ENCODE measurements at regions of chr2 and their contacts with region 1.

Region 1: DNA sequence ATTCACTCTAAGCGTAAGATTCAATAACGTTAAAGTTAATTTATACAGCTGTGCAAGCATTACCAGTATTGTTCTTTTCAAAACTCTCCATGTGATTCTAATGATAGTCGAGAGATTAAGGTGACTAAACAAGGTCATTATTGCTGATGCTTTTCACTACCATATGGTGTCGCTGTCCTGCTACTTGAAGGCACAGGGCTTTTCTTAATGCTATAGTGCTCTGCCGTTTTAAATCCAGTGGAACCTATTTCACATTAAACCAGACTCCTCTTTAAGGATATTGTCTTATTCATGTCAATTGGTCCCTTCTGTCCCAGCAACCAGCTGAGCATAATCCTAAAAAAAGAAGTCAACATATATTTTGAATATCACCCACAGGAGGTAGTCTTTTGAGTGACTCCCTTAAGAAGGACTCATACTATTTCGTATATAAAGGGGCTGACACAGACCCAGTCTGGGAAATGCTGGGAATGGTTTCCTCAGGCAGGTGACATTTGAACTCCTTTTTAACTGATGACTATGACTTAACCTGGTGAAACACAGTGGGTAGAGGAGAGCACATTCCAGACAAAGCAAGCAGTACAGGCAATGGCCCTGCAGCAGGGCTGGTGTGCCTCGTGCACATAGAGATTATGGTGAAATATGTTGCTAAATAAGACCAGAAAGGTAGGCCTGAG is 53.9 kb upstream of the CYTIP start:
- DNase-seq: peak; percentile 39 to 54 (median 50)
- ATAC-seq: peak; percentile 97
- H3K4me3 ChIP-seq: no peak overlapping the region
- H3K27ac ChIP-seq: no peak overlapping the region
- H3K4me1 ChIP-seq: no peaks in the 10 kb centered on the region
- H3K27me3 ChIP-seq: no peaks in the 10 kb centered on the region
- CTCF ChIP-seq: peak; percentile 80 to 95 (median 89)
- EP300 ChIP-seq: no peak
- POLR2A ChIP-seq: no peak
- RAD21 ChIP-seq: peak; percentile 91 to 98

Region 2: GRCh38 chr2:157596992-157597681 is 99.4 kb after region 1 on chr2:
- CTCF ChIA-PET with region 1: interaction called, 8 read pairs
- POLR2A ChIA-PET with region 1: no interaction called
- in situ Hi-C with region 1: no loop called
- intact Hi-C with region 1: loop called (anchors 2 kb)
- DNase-seq: peak in 2 of 4 experiments; percentile 34 to 38
- ATAC-seq: peak; percentile 90
- H3K4me3 ChIP-seq: no peak overlapping the region
- H3K27ac ChIP-seq: no peak overlapping the region
- H3K4me1 ChIP-seq: peaks cover 0 to 5% of the 10 kb centered on the region in 2 experiments; a peak in 1 of 5 replicates
- H3K27me3 ChIP-seq: peaks cover 0 to 9% of the 10 kb centered on the region in 2 experiments; a peak in 4 of 5 replicates
- CTCF ChIP-seq: peak; percentile 56 to 63 (median 60)
- EP300 ChIP-seq: no peak
- POLR2A ChIP-seq: no peak
- RAD21 ChIP-seq: peak in 1 of 2 experiments; percentile 60; a peak in 2 of 4 replicates

Region 3: GRCh38 chr2:157777427-157777826 is 279.7 kb after region 1 on chr2:
- CTCF ChIA-PET with region 1: no interaction called
- POLR2A ChIA-PET with region 1: no interaction called
- in situ Hi-C with region 1: no loop called
- intact Hi-C with region 1: loop called (anchors 1 kb)
- DNase-seq: peak; percentile 60 to 70 (median 66)
- ATAC-seq: peak; percentile 67; the same call in 2 of the 3 replicates
- H3K4me3 ChIP-seq: no peak overlapping the region
- H3K27ac ChIP-seq: no peak overlapping the region
- H3K4me1 ChIP-seq: peaks cover 0 to 9% of the 10 kb centered on the region in 2 experiments; a peak in 4 of 5 replicates
- H3K27me3 ChIP-seq: no peaks in the 10 kb centered on the region
- CTCF ChIP-seq: peak; percentile 54 to 86 (median 58); a peak in 4 of 6 replicates
- EP300 ChIP-seq: no peak
- POLR2A ChIP-seq: no peak
- RAD21 ChIP-seq: peak; percentile 93 to 94

Region 4: GRCh38 chr2:158753641-158754611 is 1256.2 kb after region 1 on chr2:
- CTCF ChIA-PET with region 1: no interaction called
- POLR2A ChIA-PET with region 1: no interaction called
- in situ Hi-C with region 1: loop called (anchors 25 kb)
- intact Hi-C with region 1: loop called (anchors 5 kb)
- DNase-seq: peak; percentile 74 to 84 (median 82)
- ATAC-seq: peak; percentile 97
- H3K4me3 ChIP-seq: no peak overlapping the region
- H3K27ac ChIP-seq: no peak overlapping the region
- H3K4me1 ChIP-seq: no peaks in the 10 kb centered on the region
- H3K27me3 ChIP-seq: peaks cover 4 to 18% of the 10 kb centered on the region in 2 experiments; a peak in 4 of 5 replicates
- CTCF ChIP-seq: peak; percentile 89 to 93 (median 90)
- EP300 ChIP-seq: no peak
- POLR2A ChIP-seq: no peak
- RAD21 ChIP-seq: peak; percentile 85 to 88

Measured in K562 (cell line).